ENCODE measurements at regions of chr3 and their contacts with region 1.

Region 1: GRCh38 chr3:119240591-119241434 is at the start of gene B4GALT4:
- DNase-seq: peak; percentile 86 to 89
- ATAC-seq: peak; percentile 95 to 97 (median 96)
- H3K4me3 ChIP-seq: peak within 1 kb of the TSS; percentile 57 to 90 (median 86)
- H3K27ac ChIP-seq: peak within 1 kb of the TSS; percentile 90 to 98 (median 93)
- H3K4me1 ChIP-seq: peaks cover 3 to 50% (median 34%) of the 10 kb centered on the region in 9 donors
- H3K27me3 ChIP-seq: no peaks in the 10 kb centered on the region
- CTCF ChIP-seq: no peak
- total RNA-seq, gene B4GALT4: 9.0 to 14.6 (median 11.6) TPM

Region 2: GRCh38 chr3:120348981-120349818 is 1108.4 kb after region 1 on chr3 and contains the start of gene LRRC58:
- intact Hi-C with region 1: loop called in 1 of 10 experiments (anchors 10 kb)
- DNase-seq: peak; percentile 85 to 92
- ATAC-seq: peak; percentile 97 to 99 (median 98)
- H3K4me3 ChIP-seq: peak within 1 kb of the TSS; percentile 54 to 98 (median 89)
- H3K27ac ChIP-seq: peak within 1 kb of the TSS; percentile 53 to 94 (median 89)
- H3K4me1 ChIP-seq: peaks cover 0 to 55% (median 13%) of the 10 kb centered on the region in 9 donors
- H3K27me3 ChIP-seq: no peaks in the 10 kb centered on the region
- CTCF ChIP-seq: peak in 6 of 9 donors; percentile 14 to 61 (median 42)
- total RNA-seq, gene LRRC58: 6.9 to 12.1 (median 9.1) TPM

Measured in heart right ventricle (tissue), 16 donors.